ENCODE measurements at regions of chr6 and their contacts with region 1.

Region 1: GRCh38 chr6:3045369-3045768 is 22.9 kb upstream of the RIPK1 start:
- DNase-seq: no peak
- H3K4me3 ChIP-seq: no peak overlapping the region
- H3K27ac ChIP-seq: no peak overlapping the region
- H3K4me1 ChIP-seq: peaks cover 0 to 10% (median 2%) of the 10 kb centered on the region in 4 donors
- H3K27me3 ChIP-seq: no peaks in the 10 kb centered on the region
- CTCF ChIP-seq: no peak
- EP300 ChIP-seq: no peak
- POLR2A ChIP-seq: no peak

Region 2: GRCh38 chr6:3009930-3010329 is 35.4 kb before region 1 on chr6:
- intact Hi-C with region 1: loop called (anchors 5 kb)
- DNase-seq: no peak
- H3K4me3 ChIP-seq: no peak overlapping the region
- H3K27ac ChIP-seq: no peak overlapping the region
- H3K4me1 ChIP-seq: no peaks in the 10 kb centered on the region
- H3K27me3 ChIP-seq: no peaks in the 10 kb centered on the region
- CTCF ChIP-seq: no peak
- EP300 ChIP-seq: no peak
- POLR2A ChIP-seq: no peak